CD4-positive, alpha-beta memory T cell (primary cell): ENCODE measurements at regions of chr2 and their contacts with region 1.

Region 1: GRCh38 chr2:142989273-142990204 is 112.1 kb downstream of the KYNU start:
- DNase-seq: peak in 4 of 5 donors; percentile 1 to 14 (median 4)
- H3K4me3 ChIP-seq: no peak overlapping the region
- H3K4me3 Mint-ChIP-seq: no peak overlapping the region
- H3K27ac ChIP-seq: no peak overlapping the region
- H3K27ac Mint-ChIP-seq: no peak overlapping the region
- H3K4me1 ChIP-seq: peaks cover 4% of the 10 kb centered on the region
- H3K4me1 Mint-ChIP-seq: peaks cover 0 to 1% (median 0%) of the 10 kb centered on the region in 4 donors
- H3K27me3 ChIP-seq: no peaks in the 10 kb centered on the region
- H3K27me3 Mint-ChIP-seq: peaks cover 6 to 14% of the 10 kb centered on the region in 2 donors

Region 2: GRCh38 chr2:142974288-142975024 is 15.1 kb before region 1 on chr2:
- CTCF ChIA-PET with region 1: interaction called, 40 read pairs
- POLR2A ChIA-PET with region 1: no interaction called
- intact Hi-C with region 1: no loop called
- DNase-seq: no peak
- H3K4me3 ChIP-seq: no peak overlapping the region
- H3K4me3 Mint-ChIP-seq: no peak overlapping the region
- H3K27ac ChIP-seq: no peak overlapping the region
- H3K27ac Mint-ChIP-seq: no peak overlapping the region
- H3K4me1 ChIP-seq: no peaks in the 10 kb centered on the region
- H3K4me1 Mint-ChIP-seq: peaks cover 0 to 2% (median 0%) of the 10 kb centered on the region in 4 donors
- H3K27me3 ChIP-seq: no peaks in the 10 kb centered on the region
- H3K27me3 Mint-ChIP-seq: peaks cover 1 to 10% of the 10 kb centered on the region in 2 donors

Region 3: GRCh38 chr2:143000599-143000998 is 11.1 kb after region 1 on chr2:
- CTCF ChIA-PET with region 1: interaction called, 11 read pairs
- POLR2A ChIA-PET with region 1: no interaction called
- intact Hi-C with region 1: no loop called
- DNase-seq: no peak
- H3K4me3 ChIP-seq: no peak overlapping the region
- H3K4me3 Mint-ChIP-seq: no peak overlapping the region
- H3K27ac ChIP-seq: no peak overlapping the region
- H3K27ac Mint-ChIP-seq: no peak overlapping the region
- H3K4me1 ChIP-seq: no peaks in the 10 kb centered on the region
- H3K4me1 Mint-ChIP-seq: no peaks in the 10 kb centered on the region
- H3K27me3 ChIP-seq: no peaks in the 10 kb centered on the region
- H3K27me3 Mint-ChIP-seq: peaks cover 20 to 51% of the 10 kb centered on the region in 2 donors